Ascending aorta (tissue), 2 donors: ENCODE measurements at regions of chr6 and their contacts with region 1.

Region 1: GRCh38 chr6:32984605-32985389 is 16.4 kb downstream of the BRD2 start:
- DNase-seq: peak; percentile 71 to 95
- H3K4me3 ChIP-seq: no peak overlapping the region
- H3K27ac ChIP-seq: peak overlapping the region in 1 of 2 donors; percentile 18
- H3K4me1 ChIP-seq: peaks cover 0 to 3% of the 10 kb centered on the region in 2 donors
- H3K27me3 ChIP-seq: no peaks in the 10 kb centered on the region
- CTCF ChIP-seq: peak; percentile 78 to 95 (median 89)

Region 2: GRCh38 chr6:32885698-32886286 is 99.0 kb before region 1 on chr6:
- intact Hi-C with region 1: loop called (anchors 1 kb)
- DNase-seq: no peak
- H3K4me3 ChIP-seq: no peak overlapping the region
- H3K27ac ChIP-seq: no peak overlapping the region
- H3K4me1 ChIP-seq: peaks cover 0 to 2% of the 10 kb centered on the region in 2 donors
- H3K27me3 ChIP-seq: no peaks in the 10 kb centered on the region
- CTCF ChIP-seq: peak; percentile 56 to 64 (median 63)

Region 3: GRCh38 chr6:32912951-32913350 is 71.8 kb before region 1 on chr6:
- intact Hi-C with region 1: no loop called
- DNase-seq: no peak
- H3K4me3 ChIP-seq: no peak overlapping the region
- H3K27ac ChIP-seq: no peak overlapping the region
- H3K4me1 ChIP-seq: no peaks in the 10 kb centered on the region
- H3K27me3 ChIP-seq: no peaks in the 10 kb centered on the region
- CTCF ChIP-seq: no peak